ENCODE measurements at regions of chr5 and their contacts with region 1.

Region 1: GRCh38 chr5:54217826-54218503 is 92.4 kb downstream of the ARL15 start:
- DNase-seq: no peak
- H3K4me3 ChIP-seq: no peak overlapping the region
- H3K27ac ChIP-seq: no peak overlapping the region
- H3K4me1 ChIP-seq: no peaks in the 10 kb centered on the region
- H3K27me3 ChIP-seq: no peaks in the 10 kb centered on the region
- CTCF ChIP-seq: peak in 10 of 11 experiments; percentile 30 to 82 (median 68)
- POLR2A ChIP-seq: no peak

Region 2: DNA sequence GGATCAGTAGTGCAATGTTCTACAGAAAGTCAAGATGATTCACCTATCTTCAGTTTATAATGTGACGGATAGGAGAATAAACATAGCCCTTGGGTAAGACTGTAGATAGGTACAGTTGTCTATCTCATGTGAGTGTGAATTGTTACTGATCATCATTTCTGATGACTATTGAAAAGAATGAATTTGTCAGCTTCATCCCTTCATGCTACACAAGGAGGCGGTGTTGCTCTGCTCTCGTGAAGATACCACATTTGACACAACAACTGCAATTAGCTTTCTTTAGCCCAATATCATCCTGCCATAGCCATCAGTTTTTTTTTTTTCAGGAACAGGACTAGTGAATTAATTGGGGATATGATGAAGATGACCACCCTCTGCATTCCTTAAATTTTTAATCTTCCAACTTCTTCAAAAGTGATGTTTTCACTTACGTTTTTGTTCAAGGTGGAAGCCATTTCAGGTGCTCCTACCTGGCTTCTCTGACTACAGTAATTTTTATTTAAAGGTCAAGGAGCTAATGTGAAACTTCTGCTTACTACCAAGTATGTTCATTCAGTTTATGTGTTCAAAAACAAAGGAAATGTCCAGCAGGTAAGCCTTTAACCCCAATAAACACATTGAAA is 955.5 kb before region 1 on chr5:
- intact Hi-C with region 1: loop called (anchors 10 kb)
- DNase-seq: no peak
- H3K4me3 ChIP-seq: no peak overlapping the region
- H3K27ac ChIP-seq: no peak overlapping the region
- H3K4me1 ChIP-seq: no peaks in the 10 kb centered on the region
- H3K27me3 ChIP-seq: no peaks in the 10 kb centered on the region
- CTCF ChIP-seq: peak in 4 of 11 experiments; percentile 18 to 35 (median 26)
- POLR2A ChIP-seq: no peak

Region 3: GRCh38 chr5:53560506-53561191 is 657.3 kb before region 1 on chr5 and contains the start of gene NDUFS4:
- intact Hi-C with region 1: no loop called
- DNase-seq: peak; percentile 90
- H3K4me3 ChIP-seq: peak within 1 kb of the TSS; percentile 66 to 95 (median 80)
- H3K27ac ChIP-seq: peak within 1 kb of the TSS; percentile 54 to 88 (median 85)
- H3K4me1 ChIP-seq: peaks cover 17 to 52% (median 35%) of the 10 kb centered on the region in 6 donors
- H3K27me3 ChIP-seq: peaks cover 0 to 10% (median 0%) of the 10 kb centered on the region in 7 donors
- CTCF ChIP-seq: peak in 1 of 11 experiments; percentile 7
- POLR2A ChIP-seq: no peak
- total RNA-seq, gene NDUFS4: 35.4 to 53.4 (median 46.9) TPM

Region 4: GRCh38 chr5:54443270-54443669 is 225.3 kb after region 1 on chr5:
- intact Hi-C with region 1: no loop called
- DNase-seq: no peak
- H3K4me3 ChIP-seq: no peak overlapping the region
- H3K27ac ChIP-seq: no peak overlapping the region
- H3K4me1 ChIP-seq: peaks cover 0 to 12% (median 3%) of the 10 kb centered on the region in 6 donors
- H3K27me3 ChIP-seq: no peaks in the 10 kb centered on the region
- CTCF ChIP-seq: peak in 7 of 11 experiments; percentile 28 to 52 (median 45)
- POLR2A ChIP-seq: no peak